GM12878 (cell line): ENCODE measurements at regions of chr4 and their contacts with region 1.

Region 1: GRCh38 chr4:146342600-146343192 is 128.4 kb downstream of the REELD1 start:
- DNase-seq: no peak
- ATAC-seq: peak; percentile 44
- H3K4me3 ChIP-seq: no peak overlapping the region
- H3K27ac ChIP-seq: no peak overlapping the region
- H3K4me1 ChIP-seq: peaks cover 13% of the 10 kb centered on the region
- H3K27me3 ChIP-seq: no peaks in the 10 kb centered on the region
- CTCF ChIP-seq: peak; percentile 34 to 55 (median 40); a peak in 4 of 6 replicates
- EP300 ChIP-seq: no peak
- POLR2A ChIP-seq: no peak
- RAD21 ChIP-seq: peak; percentile 85

Region 2: GRCh38 chr4:146211440-146211839 is 131.3 kb before region 1 on chr4:
- CTCF ChIA-PET with region 1: no interaction called
- POLR2A ChIA-PET with region 1: no interaction called
- RAD21 ChIA-PET with region 1: no interaction called
- SMC1A ChIA-PET with region 1: no interaction called
- in situ Hi-C with region 1: no loop called
- intact Hi-C with region 1: no loop called
- DNase-seq: no peak
- ATAC-seq: no peak
- H3K4me3 ChIP-seq: no peak overlapping the region
- H3K27ac ChIP-seq: no peak overlapping the region
- H3K4me1 ChIP-seq: no peaks in the 10 kb centered on the region
- H3K27me3 ChIP-seq: no peaks in the 10 kb centered on the region
- CTCF ChIP-seq: no peak
- EP300 ChIP-seq: no peak
- POLR2A ChIP-seq: no peak
- RAD21 ChIP-seq: no peak

Region 3: GRCh38 chr4:146273204-146273901 is 69.3 kb before region 1 on chr4:
- CTCF ChIA-PET with region 1: interaction called, 173 read pairs
- POLR2A ChIA-PET with region 1: interaction called, 5 read pairs
- RAD21 ChIA-PET with region 1: interaction called, 159 read pairs
- SMC1A ChIA-PET with region 1: interaction called, 121 read pairs
- in situ Hi-C with region 1: no loop called
- intact Hi-C with region 1: no loop called
- DNase-seq: peak; percentile 94
- ATAC-seq: peak; percentile 78
- H3K4me3 ChIP-seq: peak overlapping the region; percentile 6; the same call in 1 of the 2 replicates
- H3K27ac ChIP-seq: peak overlapping the region; percentile 81
- H3K4me1 ChIP-seq: peaks cover 66% of the 10 kb centered on the region
- H3K27me3 ChIP-seq: no peaks in the 10 kb centered on the region
- CTCF ChIP-seq: no peak
- EP300 ChIP-seq: peak; percentile 76 to 79; a peak in 2 of 4 replicates
- POLR2A ChIP-seq: peak; percentile 48; the same call in 1 of the 2 replicates
- RAD21 ChIP-seq: peak; percentile 5; the same call in 1 of the 2 replicates

Region 4: DNA sequence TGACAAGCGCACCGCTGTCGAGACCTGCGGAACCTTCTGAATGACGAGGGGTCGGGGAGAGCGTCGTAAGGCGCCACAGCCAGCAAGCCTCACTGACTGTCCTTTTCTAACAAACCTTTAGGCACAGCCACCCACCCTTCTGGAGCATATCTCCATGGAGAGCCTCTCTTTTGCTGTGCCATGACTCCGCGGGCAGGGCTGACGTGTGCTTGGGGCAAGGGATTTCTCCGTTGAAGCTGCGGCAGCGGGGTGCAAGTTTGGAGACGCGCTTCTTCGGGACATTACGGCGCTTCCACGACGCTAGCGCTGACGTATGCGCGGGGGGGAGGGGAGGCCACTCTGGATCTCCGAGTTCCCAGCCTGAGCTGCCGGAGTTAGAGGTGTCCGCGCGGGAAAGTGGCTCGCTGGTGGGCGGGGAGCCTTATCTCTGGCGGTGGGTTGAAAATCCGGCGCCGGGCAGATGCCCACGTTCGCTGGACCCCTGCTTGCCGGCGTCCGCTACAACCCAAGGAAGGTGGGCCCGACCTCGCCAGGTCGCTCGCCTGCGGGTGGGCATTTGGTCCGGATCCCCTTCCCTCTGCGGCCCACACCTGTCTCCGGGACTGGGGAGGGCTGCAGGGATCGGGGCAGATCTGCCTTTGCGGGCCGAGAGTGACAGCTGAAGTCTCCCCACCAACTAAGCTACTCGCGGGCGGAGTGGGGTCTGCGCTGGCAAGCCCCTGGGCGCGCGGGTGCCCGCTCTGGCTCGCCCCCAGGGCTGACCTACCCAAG is 179.6 kb after region 1 on chr4:
- CTCF ChIA-PET with region 1: interaction called, 11 read pairs
- POLR2A ChIA-PET with region 1: interaction called, 4 read pairs
- RAD21 ChIA-PET with region 1: interaction called, 9 read pairs
- SMC1A ChIA-PET with region 1: interaction called, 8 read pairs
- in situ Hi-C with region 1: no loop called
- intact Hi-C with region 1: loop called (anchors 2 kb)
- DNase-seq: peak; percentile 46
- ATAC-seq: peak; percentile 82
- H3K4me3 ChIP-seq: peak overlapping the region; percentile 98
- H3K27ac ChIP-seq: peak overlapping the region; percentile 88
- H3K4me1 ChIP-seq: no peaks in the 10 kb centered on the region
- H3K27me3 ChIP-seq: no peaks in the 10 kb centered on the region
- CTCF ChIP-seq: no peak
- EP300 ChIP-seq: peak; percentile 33 to 47; a peak in 1 of 4 replicates
- POLR2A ChIP-seq: peak; percentile 83
- RAD21 ChIP-seq: no peak

Region 5: GRCh38 chr4:146654687-146655520 is 312.2 kb after region 1 on chr4:
- CTCF ChIA-PET with region 1: no interaction called
- POLR2A ChIA-PET with region 1: no interaction called
- RAD21 ChIA-PET with region 1: no interaction called
- SMC1A ChIA-PET with region 1: no interaction called
- in situ Hi-C with region 1: no loop called
- intact Hi-C with region 1: loop called (anchors 10 kb)
- DNase-seq: no peak
- ATAC-seq: no peak
- H3K4me3 ChIP-seq: no peak overlapping the region
- H3K27ac ChIP-seq: no peak overlapping the region
- H3K4me1 ChIP-seq: no peaks in the 10 kb centered on the region
- H3K27me3 ChIP-seq: peaks cover 0 to 27% of the 10 kb centered on the region in 2 experiments; a peak in 3 of 4 replicates
- CTCF ChIP-seq: no peak
- EP300 ChIP-seq: no peak
- POLR2A ChIP-seq: no peak
- RAD21 ChIP-seq: no peak

Region 6: DNA sequence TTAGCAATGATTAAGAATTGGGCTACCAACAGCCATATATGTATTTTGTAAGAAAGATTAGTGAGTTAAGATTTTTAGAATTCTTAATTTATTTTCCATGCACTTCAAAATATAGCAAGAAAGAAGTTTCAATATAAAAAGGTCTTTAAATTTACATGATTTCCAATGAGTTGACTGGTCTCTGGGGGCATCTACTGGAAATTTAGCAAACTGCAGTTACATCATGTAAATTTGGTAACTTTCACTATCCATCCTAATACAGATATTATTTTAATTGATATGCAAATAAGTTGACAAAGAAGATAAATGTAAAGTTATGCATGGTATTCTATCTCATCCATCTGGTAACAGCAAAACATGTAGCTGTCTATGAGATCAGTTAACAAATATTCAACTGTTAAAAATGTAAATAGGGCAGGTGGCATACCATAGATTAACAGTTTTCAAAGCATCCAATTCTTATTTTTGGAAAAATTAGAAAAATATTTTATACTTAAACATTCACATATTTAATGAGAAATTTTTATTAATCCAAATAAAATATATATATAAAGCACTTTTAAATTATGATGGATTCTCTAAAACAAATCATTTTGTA is 573.9 kb after region 1 on chr4:
- CTCF ChIA-PET with region 1: interaction called, 18 read pairs
- POLR2A ChIA-PET with region 1: no interaction called
- RAD21 ChIA-PET with region 1: interaction called, 18 read pairs
- SMC1A ChIA-PET with region 1: interaction called, 25 read pairs
- in situ Hi-C with region 1: loop called (anchors 5 kb)
- intact Hi-C with region 1: loop called (anchors 1 kb)
- DNase-seq: peak; percentile 2
- ATAC-seq: 0 out of 3 replicates have a peak, but pooled peaks have one; percentile 27
- H3K4me3 ChIP-seq: no peak overlapping the region
- H3K27ac ChIP-seq: no peak overlapping the region
- H3K4me1 ChIP-seq: no peaks in the 10 kb centered on the region
- H3K27me3 ChIP-seq: no peaks in the 10 kb centered on the region
- CTCF ChIP-seq: peak; percentile 57 to 65 (median 63)
- EP300 ChIP-seq: no peak
- POLR2A ChIP-seq: no peak
- RAD21 ChIP-seq: peak; percentile 86